ENCODE measurements at regions of chr10 and their contacts with region 1.

Region 1: DNA sequence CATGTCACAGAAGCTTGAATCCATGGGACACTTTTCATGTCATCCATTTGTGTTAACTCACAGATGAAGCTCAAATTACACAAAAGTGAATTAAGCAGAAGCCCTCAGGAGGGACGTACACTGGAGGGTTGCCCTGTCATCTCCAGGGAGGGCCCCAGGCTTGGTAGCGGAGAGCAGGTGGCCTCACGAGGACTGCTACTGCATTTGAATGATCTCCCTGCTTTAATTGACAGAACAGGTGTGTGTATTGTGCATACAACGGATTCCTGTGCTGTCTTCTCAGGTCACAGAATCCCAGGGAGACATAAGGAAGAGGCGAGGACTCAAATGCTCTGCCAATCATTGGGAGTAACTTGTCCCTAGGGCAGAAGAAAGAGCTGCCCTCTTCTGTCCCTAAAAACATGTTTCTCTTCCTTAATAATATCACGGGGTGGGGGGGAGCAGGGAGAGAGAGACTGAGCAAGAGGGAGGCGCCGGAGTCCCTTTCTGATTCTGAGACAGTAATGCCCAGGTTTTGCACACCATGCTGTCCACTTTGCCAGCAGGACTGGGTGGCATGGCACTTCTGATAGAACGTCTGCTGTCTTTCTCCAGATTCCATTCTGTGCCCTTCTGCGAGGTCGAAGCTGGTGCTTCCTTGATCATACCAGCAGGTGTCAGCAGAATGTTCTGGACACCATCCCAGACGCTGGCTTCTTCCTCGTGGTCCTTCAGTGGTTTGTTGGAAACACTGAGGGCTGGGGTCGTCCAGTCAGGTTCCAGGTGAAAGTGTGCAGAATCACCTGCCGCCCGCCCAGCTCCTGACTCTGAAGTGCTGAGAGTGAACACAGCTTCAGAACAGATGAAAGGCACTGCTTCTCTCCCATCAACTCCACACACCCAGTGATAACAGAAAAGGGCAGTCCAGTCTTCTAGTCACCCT is 26.2 kb upstream of the RASGEF1A start:
- DNase-seq: peak; percentile 47
- H3K4me3 ChIP-seq: no peak overlapping the region
- H3K27ac ChIP-seq: no peak overlapping the region
- H3K4me1 ChIP-seq: peaks cover under 1% of the 10 kb centered on the region
- H3K27me3 ChIP-seq: peaks cover 0 to 4% of the 10 kb centered on the region in 2 experiments
- CTCF ChIP-seq: peak; percentile 59 to 65
- POLR2A ChIP-seq: no peak

Region 2: GRCh38 chr10:42970451-42971250 is 322.4 kb before region 1 on chr10:
- CTCF ChIA-PET with region 1: no interaction called
- POLR2A ChIA-PET with region 1: no interaction called
- dilution Hi-C with region 1: no loop called
- intact Hi-C with region 1: no loop called
- DNase-seq: no peak
- H3K4me3 ChIP-seq: no peak overlapping the region
- H3K27ac ChIP-seq: no peak overlapping the region
- H3K4me1 ChIP-seq: no peaks in the 10 kb centered on the region
- H3K27me3 ChIP-seq: no peaks in the 10 kb centered on the region
- CTCF ChIP-seq: no peak
- POLR2A ChIP-seq: no peak

Region 3: GRCh38 chr10:43304687-43305340 is 11.8 kb after region 1 on chr10:
- CTCF ChIA-PET with region 1: interaction called, 21 read pairs
- POLR2A ChIA-PET with region 1: no interaction called
- dilution Hi-C with region 1: no loop called
- intact Hi-C with region 1: no loop called
- DNase-seq: peak; percentile 11
- H3K4me3 ChIP-seq: peak overlapping the region in 1 of 3 experiments; percentile 10
- H3K27ac ChIP-seq: no peak overlapping the region
- H3K4me1 ChIP-seq: no peaks in the 10 kb centered on the region
- H3K27me3 ChIP-seq: peaks cover 11 to 22% of the 10 kb centered on the region in 2 experiments
- CTCF ChIP-seq: no peak
- POLR2A ChIP-seq: no peak

Region 4: DNA sequence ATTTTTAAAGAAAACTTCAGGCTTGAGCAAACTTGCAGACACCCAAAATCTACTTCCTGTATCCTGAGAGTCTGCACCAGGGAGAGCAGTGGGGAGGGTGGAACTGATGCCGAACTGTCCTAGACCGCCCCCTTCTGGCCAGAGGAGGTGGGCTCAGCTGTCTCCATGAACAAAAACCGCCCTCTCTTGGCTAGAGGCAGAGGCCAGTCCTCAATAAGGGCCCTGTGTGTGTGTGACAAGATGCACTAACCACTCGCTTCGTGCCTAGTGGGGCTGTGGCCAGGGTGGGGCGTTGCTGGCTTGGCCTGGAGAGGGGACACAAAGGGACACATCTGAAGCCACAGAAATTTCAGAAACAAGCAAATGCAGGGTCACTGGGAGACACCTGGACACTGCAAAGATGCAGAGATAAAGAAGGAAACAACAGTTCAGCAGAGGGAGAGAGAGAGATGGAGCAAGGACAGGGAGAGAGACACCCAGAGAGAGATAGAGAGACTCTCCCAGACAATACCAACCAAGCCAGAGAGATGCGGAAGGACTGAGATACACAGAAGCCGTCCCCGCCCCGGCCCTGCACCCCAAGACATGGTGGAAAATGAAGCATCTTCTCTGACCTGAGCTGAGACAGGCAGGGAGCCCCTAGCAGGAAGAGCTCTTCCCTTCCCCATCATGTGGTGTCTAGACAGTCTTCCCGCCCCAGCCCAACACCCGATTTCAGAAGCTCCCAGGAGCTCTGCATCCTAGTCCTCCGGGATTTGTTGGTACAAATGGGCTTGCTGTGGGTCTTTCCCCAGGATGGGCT is 55.7 kb after region 1 on chr10:
- CTCF ChIA-PET with region 1: interaction called, 66 read pairs
- POLR2A ChIA-PET with region 1: no interaction called
- dilution Hi-C with region 1: no loop called
- intact Hi-C with region 1: loop called (anchors 1 kb)
- DNase-seq: peak; percentile 67
- H3K4me3 ChIP-seq: no peak overlapping the region
- H3K27ac ChIP-seq: no peak overlapping the region
- H3K4me1 ChIP-seq: no peaks in the 10 kb centered on the region
- H3K27me3 ChIP-seq: peaks cover 1 to 7% of the 10 kb centered on the region in 2 experiments
- CTCF ChIP-seq: peak; percentile 94
- POLR2A ChIP-seq: no peak